Heart right ventricle (tissue), 16 donors: ENCODE measurements at regions of chr12 and their contacts with region 1.

Region 1: GRCh38 chr12:32455607-32456071 is 56.3 kb downstream of the FGD4 start:
- DNase-seq: peak in 1 of 2 donors; percentile 71
- ATAC-seq: peak in 7 of 8 donors; percentile 53 to 80 (median 67)
- H3K4me3 ChIP-seq: peak overlapping the region in 9 of 10 donors; percentile 4 to 53 (median 46)
- H3K27ac ChIP-seq: peak overlapping the region in 9 of 10 donors; percentile 27 to 76 (median 69)
- H3K4me1 ChIP-seq: peaks cover 7 to 74% (median 58%) of the 10 kb centered on the region in 9 donors
- H3K27me3 ChIP-seq: no peaks in the 10 kb centered on the region
- CTCF ChIP-seq: peak; percentile 39 to 86 (median 73)

Region 2: DNA sequence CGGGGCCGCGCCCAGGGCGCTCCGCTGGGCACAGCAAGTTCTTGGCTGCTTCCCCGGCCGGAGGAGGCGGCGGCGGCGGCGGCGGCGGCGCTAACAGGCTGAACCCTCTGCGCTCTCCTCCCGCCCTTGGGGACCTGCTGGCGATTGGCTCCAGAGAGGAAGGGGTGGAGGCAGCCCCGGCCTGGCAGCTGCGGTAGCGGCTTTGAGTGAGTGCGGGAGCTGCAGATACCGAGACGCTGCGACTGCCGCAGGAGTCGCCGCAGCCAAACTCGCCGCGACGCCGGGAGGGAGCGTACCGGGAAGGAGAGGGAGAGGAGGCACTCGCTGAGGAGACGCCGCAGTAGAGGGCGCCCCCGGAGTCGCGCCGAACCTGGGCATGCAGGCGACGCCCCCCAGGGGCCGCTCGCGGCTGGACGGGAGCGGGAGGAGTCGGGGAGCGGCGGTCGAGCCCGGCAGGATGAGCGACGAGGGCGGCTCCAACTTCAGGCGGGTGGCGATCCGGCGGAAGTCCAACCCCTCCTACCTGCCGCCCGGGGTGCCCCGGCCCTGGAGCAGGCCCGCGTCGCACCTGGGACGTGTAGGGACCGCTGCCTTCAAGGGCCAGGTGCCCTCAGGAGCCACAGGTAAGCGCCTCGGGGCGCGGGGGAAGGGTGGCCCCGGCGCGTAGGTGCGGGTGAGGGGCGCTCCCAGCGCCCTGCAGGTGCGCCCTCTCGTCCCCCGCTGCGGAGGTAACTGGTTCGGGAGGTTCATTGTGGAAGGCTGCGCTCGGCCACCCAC is 56.1 kb before region 1 on chr12 and contains the start of gene FGD4:
- intact Hi-C with region 1: loop called in 3 of 10 experiments (anchors 5 kb)
- DNase-seq: peak; percentile 84 to 88
- ATAC-seq: peak; percentile 94 to 99 (median 97)
- H3K4me3 ChIP-seq: peak within 1 kb of the TSS; percentile 62 to 98 (median 89)
- H3K27ac ChIP-seq: peak within 1 kb of the TSS; percentile 64 to 93 (median 82)
- H3K4me1 ChIP-seq: peaks cover 0 to 39% (median 21%) of the 10 kb centered on the region in 9 donors
- H3K27me3 ChIP-seq: peaks cover 0 to 32% (median 0%) of the 10 kb centered on the region in 7 donors
- CTCF ChIP-seq: peak in 8 of 9 donors; percentile 23 to 70 (median 52)
- total RNA-seq, gene FGD4: 14.4 to 36.9 (median 26.5) TPM

Region 3: GRCh38 chr12:32516230-32516629 is 60.6 kb after region 1 on chr12:
- intact Hi-C with region 1: no loop called
- DNase-seq: no peak
- ATAC-seq: no peak
- H3K4me3 ChIP-seq: no peak overlapping the region
- H3K27ac ChIP-seq: no peak overlapping the region
- H3K4me1 ChIP-seq: peaks cover 4 to 42% (median 20%) of the 10 kb centered on the region in 9 donors
- H3K27me3 ChIP-seq: no peaks in the 10 kb centered on the region
- CTCF ChIP-seq: no peak

Region 4: GRCh38 chr12:32568241-32568640 is 112.6 kb after region 1 on chr12:
- intact Hi-C with region 1: loop called in 2 of 10 experiments (anchors 10 kb)
- DNase-seq: no peak
- ATAC-seq: peak in 6 of 8 donors; percentile 52 to 68 (median 62)
- H3K4me3 ChIP-seq: no peak overlapping the region
- H3K27ac ChIP-seq: peak overlapping the region in 7 of 10 donors; percentile 50 to 79 (median 67)
- H3K4me1 ChIP-seq: peaks cover 0 to 64% (median 57%) of the 10 kb centered on the region in 9 donors
- H3K27me3 ChIP-seq: no peaks in the 10 kb centered on the region
- CTCF ChIP-seq: no peak

Region 5: DNA sequence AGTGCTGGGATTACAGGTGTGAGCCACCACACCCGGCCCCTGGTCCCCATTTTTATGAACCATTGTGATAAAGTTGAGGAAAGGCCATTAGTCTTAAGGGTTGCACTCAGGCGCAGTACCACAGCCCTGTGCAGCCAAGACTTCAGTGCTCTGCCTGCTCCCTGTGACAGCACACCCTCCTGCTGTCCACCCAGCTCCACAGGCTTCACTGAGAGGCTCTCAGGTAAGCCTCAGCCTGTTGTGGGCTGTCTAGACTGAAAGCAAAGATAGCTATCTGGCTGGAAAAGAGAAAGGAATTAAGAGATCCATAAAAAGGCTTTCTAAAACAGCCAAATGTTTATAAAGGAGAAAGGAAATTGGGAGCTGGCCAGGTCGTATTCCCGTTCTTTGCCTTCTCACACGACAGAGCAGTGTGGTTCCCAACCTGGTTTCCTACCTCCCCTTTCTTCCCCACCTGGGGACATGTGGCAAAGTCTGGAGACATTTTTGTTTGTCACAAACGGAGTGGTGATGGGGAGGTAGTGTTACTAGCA is 204.3 kb after region 1 on chr12:
- intact Hi-C with region 1: loop called in 9 of 10 experiments (anchors 1 to 10 kb)
- DNase-seq: no peak
- ATAC-seq: no peak
- H3K4me3 ChIP-seq: no peak overlapping the region
- H3K27ac ChIP-seq: peak overlapping the region in 7 of 10 donors; percentile 6 to 59 (median 29)
- H3K4me1 ChIP-seq: peaks cover 0 to 26% (median 11%) of the 10 kb centered on the region in 9 donors
- H3K27me3 ChIP-seq: no peaks in the 10 kb centered on the region
- CTCF ChIP-seq: no peak

Region 6: GRCh38 chr12:33283054-33283453 is 827.4 kb after region 1 on chr12:
- intact Hi-C with region 1: no loop called
- DNase-seq: no peak
- ATAC-seq: no peak
- H3K4me3 ChIP-seq: no peak overlapping the region
- H3K27ac ChIP-seq: no peak overlapping the region
- H3K4me1 ChIP-seq: no peaks in the 10 kb centered on the region
- H3K27me3 ChIP-seq: no peaks in the 10 kb centered on the region
- CTCF ChIP-seq: no peak